Activated CD4-positive, alpha-beta memory T cell treated with anti-CD3 and anti-CD28 coated beads, Interleukin-2, amount 10 ng/mL, durations not matched to agents 7 days and 5 days (primary cell): ENCODE measurements at regions of chr10 and their contacts with region 1.

Region 1: GRCh38 chr10:91632671-91633550 is at the start of gene PPP1R3C:
- DNase-seq: peak; percentile 56
- H3K4me3 Mint-ChIP-seq: peak within 1 kb of the TSS; percentile 54
- H3K27ac Mint-ChIP-seq: no peak within 1 kb of the TSS
- H3K4me1 Mint-ChIP-seq: peaks cover 7% of the 10 kb centered on the region
- H3K27me3 Mint-ChIP-seq: peaks cover 49% of the 10 kb centered on the region
- total RNA-seq, gene PPP1R3C: 0.23 TPM in 1 of 2 experiments, not detected in the other

Region 2: DNA sequence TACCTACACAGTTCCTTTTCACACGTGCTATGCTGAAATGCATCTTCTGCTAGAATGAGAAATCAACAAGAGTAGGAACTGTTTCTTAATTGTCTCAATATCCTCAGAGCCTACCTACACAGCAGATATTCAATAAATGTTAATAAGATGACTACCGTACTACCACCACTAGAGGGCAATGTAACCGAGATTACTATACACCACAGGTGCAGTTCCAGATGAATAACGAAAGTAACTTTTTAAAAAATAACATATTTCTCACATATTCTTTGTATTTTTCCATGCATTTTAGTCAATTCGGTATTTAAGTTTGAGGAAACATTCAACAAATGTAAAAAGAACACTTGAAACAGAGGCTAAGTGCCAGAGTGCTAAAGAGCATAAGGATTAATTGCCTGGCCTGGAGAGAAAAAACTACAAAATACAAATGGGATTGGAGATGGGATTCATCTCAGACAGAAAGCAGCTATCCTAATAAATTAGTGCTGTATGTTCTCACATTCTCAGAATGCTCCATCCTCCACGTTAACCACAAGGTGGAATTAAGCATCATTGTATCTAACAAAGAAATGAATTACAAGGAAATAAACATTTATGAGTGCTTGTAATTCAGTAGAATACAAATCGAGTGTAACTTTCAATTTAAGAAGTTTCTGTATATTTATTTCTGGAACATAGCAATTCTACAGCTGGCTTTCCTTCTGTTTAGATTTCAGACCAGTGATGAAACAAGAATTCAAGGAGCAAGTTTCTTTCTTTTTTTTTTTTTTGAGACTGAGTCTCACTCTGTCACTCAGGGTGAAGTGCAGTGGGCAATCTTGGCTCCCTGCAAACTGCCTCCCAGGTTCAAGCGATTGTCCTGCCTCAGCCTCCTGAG is 243.0 kb before region 1 on chr10:
- CTCF ChIA-PET with region 1: interaction called, 20 read pairs
- POLR2A ChIA-PET with region 1: no interaction called
- DNase-seq: no peak
- H3K4me3 Mint-ChIP-seq: no peak overlapping the region
- H3K27ac Mint-ChIP-seq: no peak overlapping the region
- H3K4me1 Mint-ChIP-seq: peaks cover 8% of the 10 kb centered on the region
- H3K27me3 Mint-ChIP-seq: peaks cover 26% of the 10 kb centered on the region

Region 3: GRCh38 chr10:91493313-91493712 is 139.6 kb before region 1 on chr10:
- CTCF ChIA-PET with region 1: interaction called, 10 read pairs
- POLR2A ChIA-PET with region 1: no interaction called
- DNase-seq: no peak
- H3K4me3 Mint-ChIP-seq: no peak overlapping the region
- H3K27ac Mint-ChIP-seq: no peak overlapping the region
- H3K4me1 Mint-ChIP-seq: no peaks in the 10 kb centered on the region
- H3K27me3 Mint-ChIP-seq: no peaks in the 10 kb centered on the region